ENCODE measurements at regions of chr7 and their contacts with region 1.

Region 1: DNA sequence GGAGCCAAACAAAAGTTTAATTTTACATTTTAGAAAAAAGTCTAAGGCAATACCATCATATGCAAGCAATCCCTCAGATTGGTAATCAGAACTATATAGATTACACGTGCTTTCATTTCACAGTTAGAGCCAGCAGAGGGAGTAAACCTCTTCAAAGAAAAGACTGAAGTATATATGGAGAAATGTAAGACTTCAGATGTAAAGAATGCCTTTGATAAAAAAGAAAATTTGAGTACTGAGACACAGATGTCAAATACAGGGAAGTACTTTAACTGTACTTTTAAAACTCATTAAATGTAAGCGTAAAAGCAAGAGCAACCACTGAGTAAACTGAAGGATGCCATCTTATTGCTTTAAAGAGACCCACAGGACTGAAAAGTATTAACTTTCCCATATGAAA is 101.4 kb upstream of the FAM133B start:
- DNase-seq: no peak
- ATAC-seq: no peak

Region 2: GRCh38 chr7:92633211-92633906 is 58.2 kb before region 1 on chr7:
- intact Hi-C with region 1: loop called (anchors 10 kb)
- DNase-seq: no peak
- ATAC-seq: peak; percentile 87

Region 3: GRCh38 chr7:92797693-92798092 is 106.1 kb after region 1 on chr7:
- intact Hi-C with region 1: no loop called
- DNase-seq: peak; percentile 40
- ATAC-seq: peak; percentile 96

Region 4: DNA sequence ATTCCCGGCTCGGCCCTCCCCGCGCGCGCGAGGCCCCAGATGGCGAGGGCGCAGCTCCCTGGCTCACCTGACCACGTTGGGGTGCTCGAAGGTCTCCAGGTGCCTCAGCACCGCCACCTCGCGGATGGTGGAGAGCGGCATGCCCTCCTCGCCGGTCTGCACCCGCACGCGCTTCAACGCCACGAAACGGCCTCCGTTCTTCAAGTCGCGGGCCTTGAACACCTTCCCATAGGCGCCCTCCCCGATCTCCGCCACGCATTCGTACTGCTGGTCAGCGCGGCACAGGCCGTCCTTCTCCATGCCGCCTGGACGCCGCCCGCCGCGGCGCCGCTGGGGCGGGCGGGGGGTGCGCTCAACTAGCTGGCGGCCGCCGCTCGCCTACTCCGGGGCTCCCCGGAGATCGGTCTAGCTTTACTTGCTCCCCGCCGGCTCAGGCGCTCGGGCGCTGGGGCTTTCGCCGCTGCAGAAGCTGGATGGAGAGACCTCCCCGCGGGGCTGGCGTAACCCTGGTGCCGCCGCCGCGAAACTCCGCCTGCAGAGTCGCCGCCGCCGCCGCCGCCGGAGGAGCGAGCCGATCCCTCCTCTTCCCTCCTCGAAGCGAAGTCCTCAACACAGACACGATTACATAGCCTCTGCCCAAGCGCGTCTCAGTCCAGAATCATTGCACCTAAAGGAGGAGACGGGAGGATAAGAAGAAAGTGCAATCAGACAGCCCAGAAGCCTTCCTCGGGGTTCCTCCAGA is 141.6 kb after region 1 on chr7:
- intact Hi-C with region 1: loop called (anchors 5 kb)
- DNase-seq: peak; percentile 93
- ATAC-seq: peak; percentile 84

Region 5: GRCh38 chr7:94649450-94649849 is 1957.9 kb after region 1 on chr7:
- intact Hi-C with region 1: no loop called
- DNase-seq: no peak
- ATAC-seq: no peak

Measured in left ventricle myocardium superior (tissue), 1 donor.